ENCODE measurements at regions of chr20 and their contacts with region 1.

Region 1: DNA sequence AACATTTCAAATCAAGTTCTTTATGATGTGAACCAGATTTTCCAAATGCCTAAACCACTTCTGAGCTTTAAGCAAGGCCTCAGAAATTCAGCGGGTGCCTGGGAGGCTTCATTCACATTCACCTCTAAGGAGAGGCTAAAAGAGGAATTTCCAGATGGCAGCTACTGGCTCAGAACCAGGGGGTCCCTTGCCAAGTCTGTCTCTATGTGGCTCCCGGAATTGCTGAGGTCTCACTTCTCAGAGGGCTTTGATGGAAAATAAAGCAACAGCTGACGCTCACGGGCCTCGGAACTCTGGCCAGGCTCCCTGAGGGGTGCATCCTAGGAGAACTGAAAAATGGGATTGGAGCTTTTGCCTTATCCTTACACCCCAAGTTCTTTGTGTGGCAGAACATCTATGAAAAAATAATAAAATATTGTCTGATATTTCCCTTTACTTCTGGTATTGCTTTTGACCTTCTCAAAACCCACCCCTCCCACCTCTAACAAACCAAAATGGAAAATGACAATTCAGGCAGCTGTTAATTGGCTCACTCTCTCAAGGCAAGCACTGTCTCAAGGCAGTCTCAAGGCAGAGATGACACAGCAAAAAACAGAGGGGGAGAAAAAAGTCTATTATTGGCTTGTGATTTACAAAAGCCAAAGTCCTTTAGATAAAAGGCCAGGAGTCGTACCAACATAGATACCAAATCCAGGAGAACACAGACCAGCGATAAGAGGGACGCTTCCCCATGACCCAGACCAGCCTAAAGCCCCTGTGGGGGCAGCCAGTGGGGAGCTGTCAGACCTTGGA is 21.8 kb upstream of the LRRN4 start:
- DNase-seq: peak; percentile 43
- H3K4me3 ChIP-seq: no peak overlapping the region
- H3K27ac ChIP-seq: peak overlapping the region; percentile 84
- H3K4me1 ChIP-seq: peaks cover 16% of the 10 kb centered on the region
- H3K27me3 ChIP-seq: no peaks in the 10 kb centered on the region
- CTCF ChIP-seq: no peak

Region 2: DNA sequence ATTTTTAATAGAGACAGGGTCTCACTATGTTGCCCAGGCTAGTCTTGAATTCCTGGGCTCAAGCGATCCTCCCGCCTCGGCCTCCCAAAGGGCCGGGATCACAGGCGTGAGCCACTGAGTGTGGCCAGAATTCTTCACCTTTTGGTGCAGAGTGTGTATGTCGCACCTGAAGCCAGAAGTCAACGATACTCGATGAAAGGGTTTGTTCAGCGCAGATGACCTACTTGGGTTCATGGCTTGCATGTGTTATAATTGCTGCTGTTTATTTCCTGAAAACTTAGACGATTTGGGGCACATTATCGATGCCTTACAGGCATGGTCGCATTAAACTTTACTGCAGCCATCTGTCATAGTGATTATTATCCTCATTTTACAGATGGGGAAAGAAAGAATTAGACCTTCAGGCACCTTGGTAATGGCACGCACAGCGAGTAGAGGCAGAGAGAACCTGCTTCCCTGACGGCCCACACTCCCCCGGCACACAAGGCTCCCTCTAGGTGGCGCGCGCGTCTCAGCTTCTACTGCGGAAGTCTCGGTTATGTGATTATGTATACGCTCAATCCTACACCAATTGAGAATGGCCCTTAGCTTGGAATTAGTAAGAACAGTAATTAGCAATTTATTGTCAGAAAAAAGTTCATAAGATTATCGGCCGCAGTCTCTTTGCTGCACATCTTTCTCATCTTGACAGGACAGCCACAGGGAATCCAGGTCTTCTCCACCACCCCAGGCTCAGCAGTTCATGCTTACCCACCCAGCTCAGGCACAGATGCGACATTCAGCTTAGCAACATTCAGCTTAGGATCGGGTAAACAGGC is 546.1 kb before region 1 on chr20:
- intact Hi-C with region 1: loop called (anchors 5 kb)
- DNase-seq: peak; percentile 83
- H3K4me3 ChIP-seq: peak overlapping the region; percentile 14
- H3K27ac ChIP-seq: no peak overlapping the region
- H3K4me1 ChIP-seq: peaks cover 11% of the 10 kb centered on the region
- H3K27me3 ChIP-seq: no peaks in the 10 kb centered on the region
- CTCF ChIP-seq: peak; percentile 79